Breast epithelium (tissue), 4 donors: ENCODE measurements at regions of chr3 and their contacts with region 1.

Region 1: GRCh38 chr3:87154197-87154596 is 72.9 kb upstream of the CHMP2B start:
- DNase-seq: no peak
- H3K4me3 ChIP-seq: no peak overlapping the region
- H3K27ac ChIP-seq: no peak overlapping the region
- H3K4me1 ChIP-seq: no peaks in the 10 kb centered on the region
- H3K27me3 ChIP-seq: no peaks in the 10 kb centered on the region
- CTCF ChIP-seq: no peak
- POLR2A ChIP-seq: no peak

Region 2: DNA sequence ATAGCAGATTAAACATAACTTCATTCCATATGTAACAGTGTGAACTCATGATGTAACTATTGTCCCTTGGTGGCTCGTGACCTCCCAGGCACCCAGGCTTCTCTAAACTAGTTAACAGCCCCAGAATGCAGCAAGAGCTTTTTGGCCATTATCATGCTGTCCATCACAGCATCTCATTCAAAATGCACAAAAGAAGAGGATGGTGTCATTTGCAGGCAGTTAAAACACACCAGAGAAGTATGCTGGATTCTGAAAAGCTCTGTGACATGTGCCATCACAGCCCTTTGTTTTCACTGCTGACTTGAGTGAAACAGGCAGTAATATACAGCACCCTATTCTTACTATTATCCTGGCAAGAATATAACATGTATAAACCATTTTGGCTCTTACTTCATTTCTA is 44.7 kb before region 1 on chr3:
- intact Hi-C with region 1: loop called (anchors 2 kb)
- DNase-seq: no peak
- H3K4me3 ChIP-seq: no peak overlapping the region
- H3K27ac ChIP-seq: no peak overlapping the region
- H3K4me1 ChIP-seq: no peaks in the 10 kb centered on the region
- H3K27me3 ChIP-seq: no peaks in the 10 kb centered on the region
- CTCF ChIP-seq: no peak
- POLR2A ChIP-seq: no peak